GM12878 (cell line): ENCODE measurements at regions of chr20 and their contacts with region 1.

Region 1: DNA sequence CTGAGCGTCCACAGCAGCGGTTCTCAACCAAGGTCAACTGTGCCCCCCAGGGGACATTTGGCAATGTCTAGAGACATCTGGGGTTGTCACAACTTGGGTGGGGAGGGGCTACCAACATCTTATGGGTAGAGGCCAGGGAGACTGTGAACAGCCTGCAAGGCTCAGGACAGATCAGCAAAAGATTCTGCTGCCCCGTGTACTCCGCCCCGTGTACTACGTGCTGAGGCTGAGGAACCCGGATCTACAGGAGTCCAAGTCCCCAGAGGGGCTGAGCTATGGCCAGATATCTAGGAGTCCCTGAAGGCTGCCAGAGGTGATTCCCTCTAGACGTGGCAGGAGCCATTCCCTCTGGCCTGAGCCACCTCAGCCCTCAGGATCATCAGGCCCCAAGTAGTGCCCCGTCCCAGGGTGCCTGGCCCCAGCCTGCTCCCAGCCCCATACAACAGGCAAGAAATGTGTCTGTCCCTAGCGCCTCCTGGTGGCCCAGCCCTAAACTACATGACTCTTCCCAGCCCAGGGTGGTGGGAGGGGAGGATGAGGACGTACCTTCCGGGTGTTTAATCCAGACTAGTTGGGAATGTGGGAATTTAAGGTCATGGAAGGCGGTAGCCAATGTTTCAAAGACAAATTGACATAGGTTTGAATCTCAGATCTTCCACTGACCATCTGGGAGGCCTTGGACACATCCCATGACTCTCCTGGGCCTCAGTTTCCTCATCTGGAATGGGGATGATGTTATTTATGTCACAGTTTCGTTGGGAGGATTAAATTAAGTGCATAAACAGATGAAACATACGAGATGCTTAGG is 49.5 kb upstream of the PTPN1 start:
- DNase-seq: no peak
- ATAC-seq: peak; percentile 92
- H3K4me3 ChIP-seq: no peak overlapping the region
- H3K27ac ChIP-seq: no peak overlapping the region
- H3K4me1 ChIP-seq: peaks cover 4% of the 10 kb centered on the region
- H3K27me3 ChIP-seq: no peaks in the 10 kb centered on the region
- CTCF ChIP-seq: peak; percentile 87 to 93 (median 93)
- EP300 ChIP-seq: no peak
- POLR2A ChIP-seq: no peak
- RAD21 ChIP-seq: peak; percentile 97

Region 2: GRCh38 chr20:50179507-50180016 is 281.1 kb before region 1 on chr20:
- CTCF ChIA-PET with region 1: interaction called, 157 read pairs
- POLR2A ChIA-PET with region 1: no interaction called
- RAD21 ChIA-PET with region 1: interaction called, 56 read pairs
- SMC1A ChIA-PET with region 1: interaction called, 60 read pairs
- in situ Hi-C with region 1: no loop called
- intact Hi-C with region 1: no loop called
- DNase-seq: no peak
- ATAC-seq: peak; percentile 44
- H3K4me3 ChIP-seq: no peak overlapping the region
- H3K27ac ChIP-seq: no peak overlapping the region
- H3K4me1 ChIP-seq: no peaks in the 10 kb centered on the region
- H3K27me3 ChIP-seq: no peaks in the 10 kb centered on the region
- CTCF ChIP-seq: no peak
- EP300 ChIP-seq: no peak
- POLR2A ChIP-seq: no peak
- RAD21 ChIP-seq: no peak

Region 3: GRCh38 chr20:50286609-50287008 is 174.1 kb before region 1 on chr20:
- CTCF ChIA-PET with region 1: interaction called, 4 read pairs
- POLR2A ChIA-PET with region 1: no interaction called
- RAD21 ChIA-PET with region 1: no interaction called
- SMC1A ChIA-PET with region 1: no interaction called
- in situ Hi-C with region 1: no loop called
- intact Hi-C with region 1: loop called (anchors 5 kb)
- DNase-seq: no peak
- ATAC-seq: peak; percentile 63
- H3K4me3 ChIP-seq: peak overlapping the region; percentile 39
- H3K27ac ChIP-seq: peak overlapping the region; percentile 59
- H3K4me1 ChIP-seq: peaks cover 24% of the 10 kb centered on the region
- H3K27me3 ChIP-seq: no peaks in the 10 kb centered on the region
- CTCF ChIP-seq: no peak
- EP300 ChIP-seq: no peak
- POLR2A ChIP-seq: no peak
- RAD21 ChIP-seq: no peak

Region 4: DNA sequence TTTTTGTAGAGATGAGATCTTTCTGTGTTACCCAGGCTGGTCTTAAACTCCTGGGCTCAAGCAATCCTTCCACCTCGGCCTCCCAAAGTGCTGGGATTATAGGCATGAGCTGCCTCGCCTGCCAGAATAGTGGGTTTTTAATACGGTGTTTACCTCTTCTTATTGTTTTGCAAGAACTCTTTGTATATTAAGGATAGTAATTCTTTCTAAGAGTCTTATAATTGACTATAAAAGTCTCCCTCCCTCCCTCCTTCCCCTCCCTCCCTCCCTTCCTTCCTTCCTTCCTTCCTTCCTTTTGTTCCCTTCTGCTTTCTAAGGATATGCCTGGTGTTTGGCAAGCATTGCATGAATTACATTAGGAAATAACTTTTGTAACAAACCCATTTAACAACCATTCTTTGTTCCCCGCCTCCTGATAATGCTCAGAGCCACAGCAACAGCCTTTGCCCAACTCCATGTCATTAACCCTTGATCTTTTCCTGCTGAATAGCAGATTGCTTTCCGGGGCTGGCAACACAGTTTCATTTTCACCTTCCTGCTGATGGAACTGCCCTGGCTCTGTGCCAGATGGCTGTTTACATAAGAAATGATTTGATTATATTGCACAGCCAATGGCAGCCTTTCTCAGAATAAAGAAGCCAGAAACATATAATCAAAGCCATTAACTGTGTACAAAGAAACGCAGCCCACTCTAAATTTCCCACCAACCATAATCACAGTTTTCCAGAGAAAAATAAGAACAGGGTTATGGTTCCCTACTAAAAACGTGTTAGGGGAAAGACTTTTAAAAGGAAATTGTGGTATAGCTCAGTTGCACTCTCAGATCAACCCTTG is 94.2 kb before region 1 on chr20:
- CTCF ChIA-PET with region 1: no interaction called
- POLR2A ChIA-PET with region 1: no interaction called
- RAD21 ChIA-PET with region 1: no interaction called
- SMC1A ChIA-PET with region 1: no interaction called
- in situ Hi-C with region 1: no loop called
- intact Hi-C with region 1: no loop called
- DNase-seq: no peak
- ATAC-seq: no peak
- H3K4me3 ChIP-seq: no peak overlapping the region
- H3K27ac ChIP-seq: no peak overlapping the region
- H3K4me1 ChIP-seq: no peaks in the 10 kb centered on the region
- H3K27me3 ChIP-seq: no peaks in the 10 kb centered on the region; a peak in 2 of 4 replicates
- CTCF ChIP-seq: no peak
- EP300 ChIP-seq: no peak
- POLR2A ChIP-seq: no peak
- RAD21 ChIP-seq: no peak

Region 5: GRCh38 chr20:50442512-50442911 is 18.2 kb before region 1 on chr20:
- CTCF ChIA-PET with region 1: no interaction called
- POLR2A ChIA-PET with region 1: no interaction called
- RAD21 ChIA-PET with region 1: no interaction called
- SMC1A ChIA-PET with region 1: no interaction called
- in situ Hi-C with region 1: no loop called
- intact Hi-C with region 1: no loop called
- DNase-seq: no peak
- ATAC-seq: no peak
- H3K4me3 ChIP-seq: no peak overlapping the region
- H3K27ac ChIP-seq: no peak overlapping the region
- H3K4me1 ChIP-seq: peaks cover 19% of the 10 kb centered on the region
- H3K27me3 ChIP-seq: no peaks in the 10 kb centered on the region
- CTCF ChIP-seq: no peak
- EP300 ChIP-seq: no peak
- POLR2A ChIP-seq: no peak
- RAD21 ChIP-seq: no peak

Region 6: DNA sequence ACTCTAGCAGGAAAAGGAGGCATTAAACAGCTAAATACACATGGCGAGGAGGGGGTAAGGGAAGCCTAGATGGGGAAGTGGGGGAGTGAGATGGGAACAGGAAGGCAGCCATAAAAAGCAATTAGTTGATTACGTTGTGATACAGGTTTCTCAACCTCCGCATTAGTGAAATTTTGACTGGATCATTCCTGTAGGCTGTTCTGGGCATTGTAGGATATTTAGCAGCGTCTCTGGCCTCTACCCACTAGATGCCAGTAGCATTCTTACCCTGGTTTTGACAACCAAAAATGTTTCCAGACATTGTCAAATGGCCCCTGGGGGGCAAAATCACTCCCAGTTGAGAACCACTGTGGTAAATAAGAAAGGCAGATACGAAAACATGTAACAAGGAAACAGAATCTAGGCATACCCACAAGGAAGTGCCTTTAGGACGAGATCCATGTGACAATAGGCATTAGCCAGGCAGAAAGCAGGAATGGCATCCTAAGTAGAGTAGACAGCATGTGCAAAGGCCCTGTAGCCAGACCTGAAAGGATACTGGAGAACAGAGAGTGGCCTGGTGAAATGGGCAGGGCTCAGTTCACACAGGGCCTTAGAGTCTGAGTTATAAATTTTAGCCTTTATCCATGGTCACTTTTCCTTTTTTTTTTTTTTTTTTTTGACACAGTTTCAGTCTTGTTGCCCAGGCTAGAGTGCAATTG is 23.8 kb after region 1 on chr20:
- CTCF ChIA-PET with region 1: interaction called, 16 read pairs
- POLR2A ChIA-PET with region 1: no interaction called
- RAD21 ChIA-PET with region 1: interaction called, 3 read pairs
- SMC1A ChIA-PET with region 1: interaction called, 5 read pairs
- in situ Hi-C with region 1: no loop called
- intact Hi-C with region 1: no loop called
- DNase-seq: no peak
- ATAC-seq: no peak
- H3K4me3 ChIP-seq: no peak overlapping the region
- H3K27ac ChIP-seq: peak overlapping the region; percentile 54
- H3K4me1 ChIP-seq: peaks cover 30% of the 10 kb centered on the region
- H3K27me3 ChIP-seq: no peaks in the 10 kb centered on the region
- CTCF ChIP-seq: no peak
- EP300 ChIP-seq: no peak
- POLR2A ChIP-seq: no peak
- RAD21 ChIP-seq: peak; percentile 36; the same call in 1 of the 2 replicates

Region 7: GRCh38 chr20:50569864-50570836 is 109.5 kb after region 1 on chr20:
- CTCF ChIA-PET with region 1: interaction called, 26 read pairs
- POLR2A ChIA-PET with region 1: no interaction called
- RAD21 ChIA-PET with region 1: interaction called, 14 read pairs
- SMC1A ChIA-PET with region 1: interaction called, 2,799 read pairs
- in situ Hi-C with region 1: no loop called
- intact Hi-C with region 1: no loop called
- DNase-seq: peak; percentile 68
- ATAC-seq: peak; percentile 96
- H3K4me3 ChIP-seq: no peak overlapping the region
- H3K27ac ChIP-seq: peak overlapping the region; percentile 83
- H3K4me1 ChIP-seq: peaks cover 25% of the 10 kb centered on the region
- H3K27me3 ChIP-seq: no peaks in the 10 kb centered on the region
- CTCF ChIP-seq: peak; percentile 70 to 90 (median 74)
- EP300 ChIP-seq: peak; percentile 61 to 71; a peak in 2 of 4 replicates
- POLR2A ChIP-seq: peak; percentile 26; the same call in 1 of the 2 replicates
- RAD21 ChIP-seq: peak; percentile 88

Region 8: DNA sequence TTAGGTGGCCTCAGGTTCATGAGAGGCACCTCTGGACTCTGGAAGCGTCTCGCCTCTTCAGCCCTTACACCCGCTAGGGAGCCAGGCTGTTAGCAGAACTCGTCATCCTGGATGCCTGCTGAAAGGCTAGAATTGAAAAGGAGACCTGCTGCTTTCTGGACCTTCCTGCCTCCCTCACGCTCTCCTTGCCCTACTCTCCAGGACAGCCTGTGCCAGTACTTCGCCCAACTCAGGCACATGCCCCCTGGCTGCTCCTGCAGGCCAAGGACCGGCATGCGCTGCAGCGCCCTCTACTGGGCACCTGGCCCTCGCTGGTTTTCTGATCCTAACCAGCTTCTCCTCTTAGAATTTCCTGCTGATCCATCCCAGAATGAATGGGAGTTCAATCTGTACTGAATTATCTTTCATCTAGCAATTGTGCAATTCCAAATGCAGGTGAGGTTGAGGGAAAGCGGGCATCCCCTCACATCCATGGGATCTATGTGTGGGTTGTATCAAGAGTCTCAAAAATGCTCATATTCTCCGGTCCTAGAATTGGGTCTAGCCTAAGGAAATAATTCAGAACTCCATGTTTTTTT is 127.5 kb after region 1 on chr20:
- CTCF ChIA-PET with region 1: interaction called, 14 read pairs
- POLR2A ChIA-PET with region 1: no interaction called
- RAD21 ChIA-PET with region 1: no interaction called
- SMC1A ChIA-PET with region 1: no interaction called
- in situ Hi-C with region 1: no loop called
- intact Hi-C with region 1: loop called (anchors 5 kb)
- DNase-seq: no peak
- ATAC-seq: peak; percentile 84
- H3K4me3 ChIP-seq: no peak overlapping the region
- H3K27ac ChIP-seq: no peak overlapping the region
- H3K4me1 ChIP-seq: no peaks in the 10 kb centered on the region
- H3K27me3 ChIP-seq: no peaks in the 10 kb centered on the region
- CTCF ChIP-seq: peak; percentile 86 to 97 (median 93)
- EP300 ChIP-seq: no peak
- POLR2A ChIP-seq: no peak; the same call in none of the 2 replicates
- RAD21 ChIP-seq: peak; percentile 55